GM12878 (cell line): ENCODE measurements at regions of chr9 and their contacts with region 1.

Region 1: GRCh38 chr9:77751341-77752091 is 103.4 kb upstream of the GNA14 start:
- DNase-seq: no peak
- ATAC-seq: peak; percentile 76
- H3K4me3 ChIP-seq: no peak overlapping the region
- H3K27ac ChIP-seq: no peak overlapping the region
- H3K4me1 ChIP-seq: no peaks in the 10 kb centered on the region
- H3K27me3 ChIP-seq: no peaks in the 10 kb centered on the region
- CTCF ChIP-seq: peak; percentile 34 to 53 (median 34); a peak in 4 of 6 replicates
- EP300 ChIP-seq: no peak
- POLR2A ChIP-seq: no peak
- RAD21 ChIP-seq: peak; percentile 51

Region 2: DNA sequence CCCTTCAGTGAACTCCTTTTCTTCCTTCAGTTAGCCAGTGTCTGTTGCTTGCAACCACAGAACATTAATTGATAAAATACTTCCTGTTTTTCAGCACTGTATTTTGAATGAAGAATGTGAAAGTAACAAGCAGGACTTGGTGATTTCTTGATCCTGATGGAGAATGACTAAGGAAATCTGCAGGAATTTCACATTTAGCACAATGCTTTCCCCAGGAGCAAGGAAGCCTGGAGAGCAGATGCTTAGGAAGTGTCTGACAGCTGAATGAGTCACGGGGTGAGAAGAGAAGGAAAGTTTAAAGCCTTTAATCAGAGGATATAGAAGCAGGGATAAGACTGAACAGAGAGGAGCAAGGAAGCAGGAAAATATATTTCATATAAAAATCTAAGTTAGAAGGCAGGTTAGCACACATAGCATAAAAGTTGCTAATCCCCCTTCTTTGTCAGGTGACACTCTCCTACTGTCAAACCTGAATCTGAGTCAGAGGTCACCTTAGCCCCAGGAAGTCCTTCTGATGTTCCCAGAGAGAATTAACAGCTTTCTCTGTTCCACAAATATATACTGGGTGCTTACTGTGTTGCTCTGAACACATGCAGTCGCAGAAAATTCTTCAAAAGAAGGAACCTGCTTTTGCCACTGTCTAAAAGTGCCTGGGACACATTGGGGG is 163.1 kb before region 1 on chr9:
- CTCF ChIA-PET with region 1: no interaction called
- POLR2A ChIA-PET with region 1: no interaction called
- RAD21 ChIA-PET with region 1: no interaction called
- SMC1A ChIA-PET with region 1: no interaction called
- in situ Hi-C with region 1: no loop called
- intact Hi-C with region 1: no loop called
- DNase-seq: no peak
- ATAC-seq: no peak
- H3K4me3 ChIP-seq: no peak overlapping the region
- H3K27ac ChIP-seq: no peak overlapping the region
- H3K4me1 ChIP-seq: no peaks in the 10 kb centered on the region
- H3K27me3 ChIP-seq: no peaks in the 10 kb centered on the region; a peak in 1 of 4 replicates
- CTCF ChIP-seq: no peak
- EP300 ChIP-seq: no peak
- POLR2A ChIP-seq: no peak
- RAD21 ChIP-seq: no peak

Region 3: DNA sequence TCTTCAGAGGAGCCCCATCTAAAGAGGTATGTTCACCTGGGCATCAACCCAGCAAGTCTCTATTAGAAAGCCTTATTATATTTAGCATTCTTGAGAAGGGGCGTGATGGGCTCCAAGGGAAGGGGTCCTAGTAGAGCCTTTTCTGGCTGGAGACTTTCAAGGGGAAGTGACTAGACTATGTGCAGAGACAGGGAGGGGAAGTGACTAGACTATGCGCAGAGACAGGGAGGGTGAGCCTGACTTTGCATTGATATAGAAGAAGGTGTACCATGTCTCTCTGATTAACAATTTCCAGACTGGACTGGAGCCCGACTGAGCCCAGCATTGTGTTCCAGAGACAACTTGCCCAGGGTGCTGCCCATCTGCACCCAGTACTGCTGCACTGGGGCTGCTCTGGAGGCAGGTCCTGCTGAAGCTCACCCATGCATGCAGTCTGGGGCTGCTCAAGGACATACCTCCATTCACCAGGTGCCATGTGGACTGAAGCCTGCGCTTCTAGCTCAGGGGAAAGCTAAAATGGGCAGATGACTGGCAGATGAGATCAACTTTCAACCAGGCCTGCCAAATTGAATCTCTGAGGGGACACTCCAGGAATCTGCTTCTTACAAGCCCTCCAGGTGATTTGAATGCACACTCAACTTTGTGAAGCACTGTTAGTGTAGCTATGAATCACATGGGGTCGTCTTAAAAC is 20.4 kb before region 1 on chr9:
- CTCF ChIA-PET with region 1: interaction called, 11 read pairs
- POLR2A ChIA-PET with region 1: no interaction called
- RAD21 ChIA-PET with region 1: no interaction called
- SMC1A ChIA-PET with region 1: interaction called, 5 read pairs
- in situ Hi-C with region 1: no loop called
- intact Hi-C with region 1: no loop called
- DNase-seq: no peak
- ATAC-seq: peak; percentile 57
- H3K4me3 ChIP-seq: no peak overlapping the region
- H3K27ac ChIP-seq: no peak overlapping the region
- H3K4me1 ChIP-seq: no peaks in the 10 kb centered on the region; the same call in 1 of the 2 replicates
- H3K27me3 ChIP-seq: no peaks in the 10 kb centered on the region
- CTCF ChIP-seq: no peak
- EP300 ChIP-seq: no peak
- POLR2A ChIP-seq: no peak
- RAD21 ChIP-seq: no peak

Region 4: DNA sequence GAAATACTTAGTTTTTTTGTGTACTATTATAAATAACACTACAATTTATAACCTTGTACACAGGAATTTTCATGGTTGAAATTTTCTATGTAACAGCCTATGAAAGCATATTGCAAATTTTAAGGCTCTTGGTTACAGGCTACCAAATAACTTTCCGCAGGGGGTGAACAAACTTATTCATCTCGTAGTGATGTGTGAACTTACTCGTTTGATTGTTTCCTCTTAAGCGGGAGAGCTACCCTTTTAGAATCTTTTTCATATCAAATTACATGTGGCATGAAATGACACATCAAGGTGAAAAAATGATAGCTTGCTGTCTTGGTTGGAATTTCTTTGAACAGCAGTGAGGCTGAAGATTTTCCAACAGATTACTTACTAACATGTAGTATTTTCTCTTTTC is 12.6 kb before region 1 on chr9:
- CTCF ChIA-PET with region 1: interaction called, 11 read pairs
- POLR2A ChIA-PET with region 1: no interaction called
- RAD21 ChIA-PET with region 1: interaction called, 4 read pairs
- SMC1A ChIA-PET with region 1: interaction called, 5 read pairs
- in situ Hi-C with region 1: no loop called
- intact Hi-C with region 1: no loop called
- DNase-seq: no peak
- ATAC-seq: no peak
- H3K4me3 ChIP-seq: no peak overlapping the region
- H3K27ac ChIP-seq: no peak overlapping the region
- H3K4me1 ChIP-seq: no peaks in the 10 kb centered on the region
- H3K27me3 ChIP-seq: no peaks in the 10 kb centered on the region
- CTCF ChIP-seq: no peak
- EP300 ChIP-seq: no peak
- POLR2A ChIP-seq: no peak
- RAD21 ChIP-seq: no peak